B cell (primary cell): ENCODE measurements at regions of chr2 and their contacts with region 1.

Region 1: GRCh38 chr2:60581433-60582282 is 28.2 kb upstream of the BCL11A start:
- DNase-seq: peak; percentile 89
- ATAC-seq: peak; percentile 100
- H3K4me3 ChIP-seq: peak overlapping the region in 4 of 5 experiments; percentile 38 to 61 (median 51)
- H3K4me3 Mint-ChIP-seq: peak overlapping the region; percentile 72
- H3K27ac ChIP-seq: no peak overlapping the region
- H3K27ac Mint-ChIP-seq: no peak overlapping the region
- H3K4me1 ChIP-seq: peaks cover 7 to 10% of the 10 kb centered on the region in 2 donors
- H3K4me1 Mint-ChIP-seq: peaks cover 7% of the 10 kb centered on the region
- H3K27me3 ChIP-seq: peaks cover 0 to 14% (median 0%) of the 10 kb centered on the region in 4 experiments
- H3K27me3 Mint-ChIP-seq: peaks cover 24% of the 10 kb centered on the region
- CTCF ChIP-seq: peak; percentile 98

Region 2: GRCh38 chr2:59301466-59302402 is 1279.9 kb before region 1 on chr2:
- CTCF ChIA-PET with region 1: interaction called, 42 read pairs
- POLR2A ChIA-PET with region 1: no interaction called
- intact Hi-C with region 1: loop called (anchors 1 kb)
- DNase-seq: peak; percentile 80
- ATAC-seq: peak; percentile 91
- H3K4me3 ChIP-seq: no peak overlapping the region
- H3K4me3 Mint-ChIP-seq: no peak overlapping the region
- H3K27ac ChIP-seq: no peak overlapping the region
- H3K27ac Mint-ChIP-seq: no peak overlapping the region
- H3K4me1 ChIP-seq: no peaks in the 10 kb centered on the region
- H3K4me1 Mint-ChIP-seq: no peaks in the 10 kb centered on the region
- H3K27me3 ChIP-seq: no peaks in the 10 kb centered on the region
- H3K27me3 Mint-ChIP-seq: peaks cover 4% of the 10 kb centered on the region
- CTCF ChIP-seq: peak; percentile 74

Region 3: DNA sequence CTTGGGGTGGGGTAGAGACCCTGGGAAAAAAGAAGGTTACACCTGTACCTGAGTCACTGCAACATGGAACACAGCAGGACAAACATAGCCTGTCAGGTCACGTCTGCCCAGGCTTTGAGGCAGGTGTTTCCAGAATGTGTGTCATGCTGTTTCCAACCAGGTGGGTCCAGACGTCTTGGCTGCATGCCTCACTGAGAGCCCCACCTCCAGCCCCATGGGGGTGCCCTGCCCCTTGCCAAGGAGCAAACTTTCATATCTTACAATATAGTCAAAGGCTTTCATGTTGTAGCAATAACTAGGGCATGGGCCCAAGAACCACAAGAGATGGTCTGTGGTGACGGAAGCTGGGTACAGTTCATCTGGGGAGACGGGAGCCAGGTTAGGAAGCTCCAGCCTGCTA is 527.9 kb before region 1 on chr2:
- CTCF ChIA-PET with region 1: no interaction called
- POLR2A ChIA-PET with region 1: no interaction called
- intact Hi-C with region 1: no loop called
- DNase-seq: peak; percentile 18
- ATAC-seq: no peak
- H3K4me3 ChIP-seq: no peak overlapping the region
- H3K4me3 Mint-ChIP-seq: no peak overlapping the region
- H3K27ac ChIP-seq: no peak overlapping the region
- H3K27ac Mint-ChIP-seq: no peak overlapping the region
- H3K4me1 ChIP-seq: peaks cover 12 to 13% of the 10 kb centered on the region in 2 donors
- H3K4me1 Mint-ChIP-seq: peaks cover 24% of the 10 kb centered on the region
- H3K27me3 ChIP-seq: peaks cover 0 to 3% (median 0%) of the 10 kb centered on the region in 4 experiments
- H3K27me3 Mint-ChIP-seq: peaks cover 4% of the 10 kb centered on the region
- CTCF ChIP-seq: no peak

Region 4: GRCh38 chr2:60312618-60313017 is 269.0 kb before region 1 on chr2:
- CTCF ChIA-PET with region 1: no interaction called
- POLR2A ChIA-PET with region 1: no interaction called
- intact Hi-C with region 1: no loop called
- DNase-seq: peak; percentile 42
- ATAC-seq: no peak
- H3K4me3 ChIP-seq: no peak overlapping the region
- H3K4me3 Mint-ChIP-seq: peak overlapping the region; percentile 33
- H3K27ac ChIP-seq: peak overlapping the region in 1 of 2 donors; percentile 9
- H3K27ac Mint-ChIP-seq: peak overlapping the region; percentile 70
- H3K4me1 ChIP-seq: peaks cover 64 to 83% of the 10 kb centered on the region in 2 donors
- H3K4me1 Mint-ChIP-seq: peaks cover 89% of the 10 kb centered on the region
- H3K27me3 ChIP-seq: no peaks in the 10 kb centered on the region
- H3K27me3 Mint-ChIP-seq: no peaks in the 10 kb centered on the region
- CTCF ChIP-seq: no peak

Region 5: DNA sequence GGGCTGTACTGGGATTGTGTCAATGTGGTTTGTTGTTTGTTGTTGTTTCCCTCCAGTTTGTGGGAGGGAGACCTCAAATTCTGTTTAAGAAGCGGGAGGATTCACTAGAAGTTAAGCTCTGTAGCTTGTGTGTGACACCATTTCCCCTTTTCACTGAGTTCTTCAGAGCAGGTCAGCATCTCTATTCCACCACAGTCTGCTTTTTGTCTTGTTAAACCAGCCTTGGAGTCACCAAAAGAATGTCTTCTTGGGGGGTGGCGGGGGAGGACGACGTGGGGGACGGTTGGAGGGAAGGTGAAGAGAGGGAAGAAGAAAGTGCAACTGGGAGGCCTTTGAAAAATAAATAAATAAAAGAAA is 25.9 kb before region 1 on chr2:
- CTCF ChIA-PET with region 1: interaction called, 63 read pairs
- POLR2A ChIA-PET with region 1: interaction called, 6 read pairs
- intact Hi-C with region 1: loop called (anchors 2 kb)
- DNase-seq: no peak
- ATAC-seq: peak; percentile 8
- H3K4me3 ChIP-seq: peak overlapping the region; percentile 78 to 98 (median 88)
- H3K4me3 Mint-ChIP-seq: peak overlapping the region; percentile 97
- H3K27ac ChIP-seq: peak overlapping the region; percentile 90 to 91
- H3K27ac Mint-ChIP-seq: peak overlapping the region; percentile 98
- H3K4me1 ChIP-seq: peaks cover 9 to 18% of the 10 kb centered on the region in 2 donors
- H3K4me1 Mint-ChIP-seq: peaks cover 23% of the 10 kb centered on the region
- H3K27me3 ChIP-seq: no peaks in the 10 kb centered on the region
- H3K27me3 Mint-ChIP-seq: no peaks in the 10 kb centered on the region
- CTCF ChIP-seq: no peak

Region 6: DNA sequence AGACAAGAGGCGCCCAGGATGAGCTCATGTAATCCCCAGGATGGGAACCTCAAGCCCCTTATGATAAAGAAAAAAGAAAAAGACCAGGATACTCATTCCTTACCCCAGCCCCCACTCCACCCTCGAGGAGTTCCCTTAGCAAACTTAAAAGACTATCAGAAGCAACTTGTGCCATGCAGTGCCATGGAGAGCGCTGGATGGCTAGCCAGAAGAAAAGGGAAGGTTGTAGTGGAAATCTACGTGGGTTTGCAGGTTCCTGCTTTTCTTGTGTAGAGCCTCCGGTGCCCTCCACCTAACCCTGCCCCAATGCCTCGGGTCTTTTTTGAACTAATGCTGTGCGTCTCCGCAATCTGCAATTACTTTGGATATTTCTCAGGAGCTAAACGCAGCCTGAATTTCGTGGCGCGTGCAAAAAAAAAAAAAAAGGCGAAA is 12.0 kb before region 1 on chr2:
- CTCF ChIA-PET with region 1: interaction called, 63 read pairs
- POLR2A ChIA-PET with region 1: interaction called, 7 read pairs
- intact Hi-C with region 1: no loop called
- DNase-seq: peak; percentile 54
- ATAC-seq: peak; percentile 57
- H3K4me3 ChIP-seq: peak overlapping the region; percentile 42 to 77 (median 67)
- H3K4me3 Mint-ChIP-seq: no peak overlapping the region
- H3K27ac ChIP-seq: peak overlapping the region in 1 of 2 donors; percentile 18
- H3K27ac Mint-ChIP-seq: no peak overlapping the region
- H3K4me1 ChIP-seq: peaks cover 20 to 31% of the 10 kb centered on the region in 2 donors
- H3K4me1 Mint-ChIP-seq: peaks cover 13% of the 10 kb centered on the region
- H3K27me3 ChIP-seq: peaks cover 0 to 24% (median 21%) of the 10 kb centered on the region in 4 experiments
- H3K27me3 Mint-ChIP-seq: peaks cover 16% of the 10 kb centered on the region
- CTCF ChIP-seq: no peak

Region 7: GRCh38 chr2:60806988-60807681 is 225.5 kb after region 1 on chr2:
- CTCF ChIA-PET with region 1: no interaction called
- POLR2A ChIA-PET with region 1: no interaction called
- intact Hi-C with region 1: no loop called
- DNase-seq: peak; percentile 32
- ATAC-seq: peak; percentile 56
- H3K4me3 ChIP-seq: no peak overlapping the region
- H3K4me3 Mint-ChIP-seq: no peak overlapping the region
- H3K27ac ChIP-seq: peak overlapping the region; percentile 31 to 55
- H3K27ac Mint-ChIP-seq: peak overlapping the region; percentile 83
- H3K4me1 ChIP-seq: peaks cover 20 to 32% of the 10 kb centered on the region in 2 donors
- H3K4me1 Mint-ChIP-seq: peaks cover 34% of the 10 kb centered on the region
- H3K27me3 ChIP-seq: no peaks in the 10 kb centered on the region
- H3K27me3 Mint-ChIP-seq: no peaks in the 10 kb centered on the region
- CTCF ChIP-seq: no peak

Region 8: GRCh38 chr2:60936757-60937156 is 355.1 kb after region 1 on chr2:
- CTCF ChIA-PET with region 1: no interaction called
- POLR2A ChIA-PET with region 1: no interaction called
- intact Hi-C with region 1: no loop called
- DNase-seq: no peak
- ATAC-seq: no peak
- H3K4me3 ChIP-seq: no peak overlapping the region
- H3K4me3 Mint-ChIP-seq: no peak overlapping the region
- H3K27ac ChIP-seq: peak overlapping the region in 1 of 2 donors; percentile 11
- H3K27ac Mint-ChIP-seq: peak overlapping the region; percentile 67
- H3K4me1 ChIP-seq: peaks cover 2 to 7% of the 10 kb centered on the region in 2 donors
- H3K4me1 Mint-ChIP-seq: peaks cover 53% of the 10 kb centered on the region
- H3K27me3 ChIP-seq: no peaks in the 10 kb centered on the region
- H3K27me3 Mint-ChIP-seq: no peaks in the 10 kb centered on the region
- CTCF ChIP-seq: no peak